ENCODE measurements at regions of chr7 and their contacts with region 1.

Region 1: GRCh38 chr7:115356139-115356746 is 434.3 kb downstream of the MDFIC start:
- DNase-seq: peak; percentile 48
- ATAC-seq: 0 out of 2 replicates have a peak, but pooled peaks have one; percentile 28
- H3K4me3 ChIP-seq: no peak overlapping the region
- H3K27ac ChIP-seq: no peak overlapping the region
- H3K4me1 ChIP-seq: peaks cover 15% of the 10 kb centered on the region
- H3K27me3 ChIP-seq: no peaks in the 10 kb centered on the region
- CTCF ChIP-seq: peak; percentile 46

Region 2: GRCh38 chr7:114865564-114865963 is 490.7 kb before region 1 on chr7:
- CTCF ChIA-PET with region 1: no interaction called
- POLR2A ChIA-PET with region 1: no interaction called
- intact Hi-C with region 1: loop called (anchors 5 kb)
- DNase-seq: peak; percentile 60
- ATAC-seq: peak; percentile 82; the same call in 1 of the 2 replicates
- H3K4me3 ChIP-seq: no peak overlapping the region
- H3K27ac ChIP-seq: no peak overlapping the region
- H3K4me1 ChIP-seq: peaks cover 11% of the 10 kb centered on the region
- H3K27me3 ChIP-seq: no peaks in the 10 kb centered on the region
- CTCF ChIP-seq: peak; percentile 87

Region 3: DNA sequence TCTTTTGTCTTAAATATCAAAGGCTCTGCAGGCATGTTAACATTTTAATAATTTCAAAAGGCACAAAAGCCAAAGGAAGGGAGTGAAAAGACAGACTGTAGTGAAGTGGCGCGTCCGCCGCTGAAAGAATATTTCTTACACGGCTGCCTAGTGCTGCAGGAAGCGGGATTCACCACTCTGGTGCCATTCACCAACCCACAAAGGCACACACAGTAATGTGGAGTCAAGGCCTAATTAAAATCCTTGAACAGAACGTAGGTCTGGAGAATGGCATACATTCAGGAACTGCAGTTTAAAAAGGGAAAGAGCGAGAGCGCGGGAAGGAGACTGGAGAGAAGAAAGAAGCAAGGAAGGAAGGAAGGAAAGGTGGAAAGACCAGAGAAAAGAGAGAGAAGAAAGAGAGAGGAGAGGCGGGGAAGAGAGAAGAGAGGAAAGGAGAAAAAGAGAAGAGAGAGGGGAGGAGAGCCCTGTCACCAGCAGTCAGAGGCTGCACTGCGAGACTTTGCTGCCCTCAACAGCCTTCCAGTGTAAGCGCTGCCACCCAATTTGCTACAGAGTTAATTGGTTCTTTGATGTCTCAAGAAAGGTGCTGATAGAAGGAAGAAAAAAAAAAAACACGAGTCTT is 119.6 kb after region 1 on chr7:
- CTCF ChIA-PET with region 1: interaction called, 3 read pairs
- POLR2A ChIA-PET with region 1: no interaction called
- intact Hi-C with region 1: loop called (anchors 10 kb)
- DNase-seq: peak; percentile 26
- ATAC-seq: peak; percentile 81
- H3K4me3 ChIP-seq: no peak overlapping the region
- H3K27ac ChIP-seq: no peak overlapping the region
- H3K4me1 ChIP-seq: no peaks in the 10 kb centered on the region
- H3K27me3 ChIP-seq: no peaks in the 10 kb centered on the region
- CTCF ChIP-seq: peak; percentile 44; the same call in 1 of the 2 replicates

Measured in PC-3 (cell line).